Activated CD8-positive, alpha-beta T cell treated with anti-CD3 and anti-CD28 coated beads for 36 hours (primary cell): ENCODE measurements at regions of chr17 and their contacts with region 1.

Region 1: DNA sequence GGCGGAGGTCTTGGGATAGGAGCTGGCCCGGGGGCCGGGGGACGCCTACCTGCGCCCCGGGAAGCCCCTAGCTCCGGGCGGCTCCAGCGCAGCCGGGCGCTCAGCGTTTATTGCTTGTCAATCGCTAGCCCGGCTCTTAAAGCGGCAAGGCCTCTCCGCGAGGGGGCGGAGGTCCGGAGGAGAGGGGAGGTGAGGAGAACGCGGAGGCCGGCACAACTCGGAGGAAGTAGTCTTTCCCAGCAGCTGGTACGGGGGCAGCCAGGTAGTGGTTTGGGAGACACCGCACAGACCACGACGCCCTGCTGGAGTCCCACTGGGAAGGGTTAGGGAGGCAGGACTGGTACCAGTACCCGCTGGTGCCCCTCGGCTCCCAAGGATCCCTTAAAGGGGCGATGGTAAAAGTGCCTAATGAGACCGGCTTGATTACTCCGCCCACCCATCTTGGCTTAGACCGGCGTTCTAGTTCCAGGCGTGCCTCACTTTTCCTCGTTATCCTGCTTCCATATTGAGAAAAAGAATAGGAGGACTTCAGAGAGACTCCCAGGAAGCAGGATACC is at the start of gene MPP2:
- DNase-seq: peak; percentile 80
- ATAC-seq: peak; percentile 64
- H3K4me3 Mint-ChIP-seq: peak within 1 kb of the TSS; percentile 77
- H3K27ac Mint-ChIP-seq: peak within 1 kb of the TSS; percentile 67
- H3K4me1 Mint-ChIP-seq: peaks cover 12% of the 10 kb centered on the region
- H3K27me3 Mint-ChIP-seq: peaks cover 11% of the 10 kb centered on the region
- CTCF ChIP-seq: no peak
- total RNA-seq, gene MPP2: 6.0 TPM

Region 2: GRCh38 chr17:43891851-43892646 is 15.5 kb before region 1 on chr17:
- CTCF ChIA-PET with region 1: interaction called, 10 read pairs
- POLR2A ChIA-PET with region 1: no interaction called
- intact Hi-C with region 1: no loop called
- DNase-seq: no peak
- ATAC-seq: no peak
- H3K4me3 Mint-ChIP-seq: no peak overlapping the region
- H3K27ac Mint-ChIP-seq: no peak overlapping the region
- H3K4me1 Mint-ChIP-seq: no peaks in the 10 kb centered on the region
- H3K27me3 Mint-ChIP-seq: no peaks in the 10 kb centered on the region
- CTCF ChIP-seq: no peak

Region 3: GRCh38 chr17:43927060-43927864 is 19.8 kb after region 1 on chr17:
- CTCF ChIA-PET with region 1: interaction called, 48 read pairs
- POLR2A ChIA-PET with region 1: interaction called, 5 read pairs
- intact Hi-C with region 1: no loop called
- DNase-seq: peak; percentile 63
- ATAC-seq: peak; percentile 60
- H3K4me3 Mint-ChIP-seq: peak overlapping the region; percentile 70
- H3K27ac Mint-ChIP-seq: peak overlapping the region; percentile 69
- H3K4me1 Mint-ChIP-seq: peaks cover 26% of the 10 kb centered on the region
- H3K27me3 Mint-ChIP-seq: no peaks in the 10 kb centered on the region
- CTCF ChIP-seq: no peak

Region 4: DNA sequence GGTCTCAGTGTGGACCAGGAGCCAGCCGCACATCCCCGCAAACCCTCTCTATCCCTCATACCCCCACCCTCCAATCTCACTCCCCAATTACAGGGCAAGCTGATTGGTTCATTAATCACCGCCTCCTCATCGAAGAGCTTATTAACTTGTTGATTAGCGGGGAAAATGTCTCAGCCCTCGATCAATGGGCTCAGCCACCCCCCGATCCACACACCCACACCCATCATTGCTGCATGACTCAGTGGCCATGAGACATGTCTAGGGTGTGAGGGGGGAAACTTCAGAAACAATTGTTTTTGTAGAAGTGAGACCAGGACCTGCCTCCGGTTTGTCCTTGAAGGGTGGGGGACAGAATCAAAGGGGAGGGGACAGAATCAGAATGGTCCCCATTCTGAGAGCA is 48.7 kb after region 1 on chr17:
- CTCF ChIA-PET with region 1: no interaction called
- POLR2A ChIA-PET with region 1: no interaction called
- intact Hi-C with region 1: no loop called
- DNase-seq: no peak
- ATAC-seq: no peak
- H3K4me3 Mint-ChIP-seq: no peak overlapping the region
- H3K27ac Mint-ChIP-seq: no peak overlapping the region
- H3K4me1 Mint-ChIP-seq: peaks cover 2% of the 10 kb centered on the region
- H3K27me3 Mint-ChIP-seq: peaks cover 35% of the 10 kb centered on the region
- CTCF ChIP-seq: no peak